ENCODE measurements at regions of chr1 and their contacts with region 1.

Region 1: DNA sequence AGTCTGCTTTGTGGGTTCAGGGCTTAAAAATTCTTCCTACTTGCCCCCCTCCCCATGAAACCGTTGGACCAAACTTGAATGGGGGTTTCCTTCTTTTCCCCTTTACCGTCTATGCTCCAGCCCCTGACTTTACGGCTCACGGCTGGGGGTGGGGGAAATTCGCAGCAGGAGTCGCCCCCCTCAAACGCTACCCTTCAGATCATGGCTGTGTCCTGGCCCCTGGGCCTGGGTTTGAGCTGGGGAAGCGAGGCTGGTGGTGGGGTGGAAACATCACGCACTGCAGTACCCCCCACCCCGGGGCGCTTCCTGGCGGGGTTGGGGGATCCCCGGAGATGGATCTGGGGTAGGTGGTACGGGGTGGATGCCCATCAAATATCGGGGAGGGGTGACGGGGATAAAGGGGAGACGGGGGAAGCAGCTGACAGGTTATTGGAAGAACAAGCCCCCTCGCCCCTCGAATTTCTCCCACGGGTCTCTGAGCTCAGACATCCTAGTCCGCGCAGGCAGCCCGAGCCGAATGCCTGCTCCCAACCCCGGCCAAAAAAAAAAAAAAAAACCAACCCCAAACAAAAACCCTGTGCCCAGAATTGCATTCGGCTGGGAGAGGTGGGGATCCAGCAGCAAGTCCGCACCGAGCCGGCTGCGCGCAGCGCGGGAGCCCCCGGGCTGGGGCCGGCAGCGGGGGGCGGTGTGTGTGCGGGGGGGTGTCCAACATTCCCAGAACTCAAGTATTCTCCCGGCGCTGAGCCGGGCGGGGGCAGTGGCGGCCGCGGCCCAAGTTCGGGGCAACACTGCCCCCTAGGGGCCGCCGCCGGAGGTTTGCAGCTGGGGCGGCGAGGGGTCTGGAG is 59.0 kb upstream of the ACOT11 start:
- DNase-seq: peak; percentile 91
- CTCF ChIP-seq: peak; percentile 91

Region 2: DNA sequence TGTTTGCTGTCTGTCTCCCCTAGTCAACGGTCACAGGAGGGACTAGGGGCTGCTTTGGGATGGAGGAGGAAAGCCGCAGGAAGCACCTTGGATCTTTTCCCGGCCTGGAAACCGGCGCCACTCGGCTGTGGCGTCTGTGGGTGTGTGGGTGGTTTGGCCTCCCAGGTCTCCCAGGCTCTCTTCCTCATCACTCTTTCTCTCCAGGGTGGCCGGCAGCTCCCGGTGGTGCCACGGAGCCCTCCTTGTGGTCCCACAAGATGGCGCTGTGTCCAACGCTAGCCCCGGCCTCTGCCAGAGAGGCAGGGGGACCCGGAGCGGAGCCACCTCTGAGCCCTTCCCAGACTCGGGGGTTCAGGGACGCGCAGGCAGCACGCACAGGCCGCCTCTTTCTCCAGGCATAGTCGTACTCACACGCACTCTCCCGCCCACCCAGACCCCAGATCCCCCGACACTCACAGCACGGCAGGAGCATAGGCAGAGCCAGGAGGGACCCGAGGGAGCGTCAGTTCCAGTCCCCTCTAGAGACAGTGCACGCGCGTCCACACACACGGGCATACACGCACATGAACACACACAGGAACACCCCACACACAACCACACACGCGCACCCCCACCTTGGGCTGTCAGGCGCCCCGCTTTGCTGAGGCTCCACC is 367.4 kb before region 1 on chr1:
- CTCF ChIA-PET with region 1: interaction called, 36 read pairs
- POLR2A ChIA-PET with region 1: no interaction called
- DNase-seq: peak; percentile 81
- CTCF ChIP-seq: peak; percentile 75

Region 3: DNA sequence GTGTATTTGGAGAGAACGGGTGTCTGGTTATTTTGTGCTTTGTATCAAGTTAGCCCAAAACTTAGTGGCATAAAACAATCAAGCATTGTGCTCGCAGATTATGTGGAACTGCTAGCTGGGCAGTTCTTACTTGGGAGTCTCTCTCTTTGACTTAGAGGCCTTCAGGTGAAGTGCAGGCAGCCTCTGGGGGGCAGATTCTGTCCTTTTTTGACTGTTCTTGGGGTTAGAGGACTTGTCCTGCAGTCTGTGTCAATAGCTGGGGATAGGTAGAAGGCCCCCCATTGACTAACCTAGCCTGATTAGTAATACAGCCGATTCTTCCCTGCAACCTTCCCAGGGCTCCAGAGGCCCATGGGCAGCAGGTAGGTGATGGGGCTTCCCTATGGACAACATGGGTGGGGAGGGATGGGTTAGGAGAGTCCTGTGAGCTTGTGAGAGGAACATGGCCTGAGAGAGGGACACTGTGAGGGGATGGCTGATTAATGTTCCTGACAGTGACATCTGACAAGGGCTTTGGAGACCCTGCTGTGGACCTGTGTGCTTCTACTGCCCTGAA is 21.8 kb after region 1 on chr1:
- CTCF ChIA-PET with region 1: interaction called, 13 read pairs
- POLR2A ChIA-PET with region 1: no interaction called
- DNase-seq: peak; percentile 4
- CTCF ChIP-seq: no peak

Measured in GM10248 (cell line).